ENCODE measurements at regions of chr11 and their contacts with region 1.

Region 1: DNA sequence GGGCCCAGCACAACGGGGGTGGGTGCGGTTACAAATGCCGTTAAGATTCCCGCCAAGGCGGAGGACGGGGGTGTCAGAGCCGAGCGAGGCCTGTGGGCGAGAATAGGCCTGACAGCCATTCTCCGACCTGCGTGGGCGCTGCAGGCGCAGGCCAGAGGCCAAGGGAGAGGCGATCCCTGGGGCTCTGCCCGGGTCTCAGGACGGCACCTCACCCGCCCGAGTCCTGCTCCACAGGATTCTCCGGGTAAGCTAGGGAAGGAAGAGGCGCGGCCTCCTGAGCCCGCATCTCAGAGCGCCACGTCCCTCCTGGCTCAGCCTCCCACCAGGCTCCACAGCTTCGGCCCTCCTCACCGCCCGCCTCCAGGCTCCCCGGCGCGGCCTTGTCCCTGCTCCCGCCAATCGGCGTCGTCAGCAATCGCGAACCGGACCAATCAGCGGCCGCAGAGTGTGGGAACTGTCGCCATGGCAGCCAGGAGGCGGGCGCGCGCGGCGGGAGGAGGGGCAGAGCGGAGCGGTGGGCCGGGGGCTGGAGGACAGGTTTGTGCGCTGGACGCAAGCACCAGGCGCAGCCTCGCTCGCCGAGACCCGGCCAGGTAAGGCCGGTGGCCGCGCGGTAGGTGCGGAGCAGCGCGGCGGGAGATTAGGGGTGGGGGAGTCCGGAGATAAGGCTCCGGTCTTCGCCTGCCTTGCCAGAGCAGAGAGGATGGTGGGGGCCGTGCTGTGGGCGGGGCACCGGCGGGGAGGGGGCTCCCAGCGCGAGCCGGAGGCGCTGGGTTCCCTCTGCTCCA is at the start of gene NUCB2:
- DNase-seq: peak; percentile 99
- ATAC-seq: peak; percentile 92
- H3K4me3 Mint-ChIP-seq: peak within 1 kb of the TSS; percentile 75
- H3K27ac Mint-ChIP-seq: peak within 1 kb of the TSS; percentile 96
- H3K4me1 Mint-ChIP-seq: peaks cover 36% of the 10 kb centered on the region
- H3K27me3 Mint-ChIP-seq: no peaks in the 10 kb centered on the region
- total RNA-seq, gene NUCB2: 45.0 to 59.9 TPM

Region 2: GRCh38 chr11:16738193-16738946 is 538.1 kb before region 1 on chr11 and contains the start of gene C11orf58:
- CTCF ChIA-PET with region 1: interaction called, 3 read pairs
- POLR2A ChIA-PET with region 1: no interaction called
- intact Hi-C with region 1: loop called in 1 of 2 experiments (anchors 2 kb)
- DNase-seq: peak; percentile 96
- ATAC-seq: peak; percentile 97
- H3K4me3 Mint-ChIP-seq: no peak within 1 kb of the TSS
- H3K27ac Mint-ChIP-seq: peak within 1 kb of the TSS; percentile 92
- H3K4me1 Mint-ChIP-seq: peaks cover 23% of the 10 kb centered on the region
- H3K27me3 Mint-ChIP-seq: no peaks in the 10 kb centered on the region
- total RNA-seq, gene C11orf58: 142 to 193 TPM

Region 3: GRCh38 chr11:17298302-17298701 is 21.9 kb after region 1 on chr11:
- CTCF ChIA-PET with region 1: interaction called, 4 read pairs
- POLR2A ChIA-PET with region 1: interaction called, 8 read pairs
- intact Hi-C with region 1: loop called (anchors 1 kb)
- DNase-seq: peak; percentile 83
- ATAC-seq: peak; percentile 82
- H3K4me3 Mint-ChIP-seq: no peak overlapping the region
- H3K27ac Mint-ChIP-seq: no peak overlapping the region
- H3K4me1 Mint-ChIP-seq: peaks cover 40% of the 10 kb centered on the region
- H3K27me3 Mint-ChIP-seq: no peaks in the 10 kb centered on the region

Region 4: GRCh38 chr11:17389211-17389956 is 113.0 kb after region 1 on chr11:
- CTCF ChIA-PET with region 1: interaction called, 7 read pairs
- POLR2A ChIA-PET with region 1: no interaction called
- intact Hi-C with region 1: loop called in 1 of 2 experiments (anchors 1 kb)
- DNase-seq: peak; percentile 86
- ATAC-seq: peak; percentile 82
- H3K4me3 Mint-ChIP-seq: peak overlapping the region; percentile 66
- H3K27ac Mint-ChIP-seq: no peak overlapping the region
- H3K4me1 Mint-ChIP-seq: peaks cover 3% of the 10 kb centered on the region
- H3K27me3 Mint-ChIP-seq: peaks cover 8% of the 10 kb centered on the region

Region 5: DNA sequence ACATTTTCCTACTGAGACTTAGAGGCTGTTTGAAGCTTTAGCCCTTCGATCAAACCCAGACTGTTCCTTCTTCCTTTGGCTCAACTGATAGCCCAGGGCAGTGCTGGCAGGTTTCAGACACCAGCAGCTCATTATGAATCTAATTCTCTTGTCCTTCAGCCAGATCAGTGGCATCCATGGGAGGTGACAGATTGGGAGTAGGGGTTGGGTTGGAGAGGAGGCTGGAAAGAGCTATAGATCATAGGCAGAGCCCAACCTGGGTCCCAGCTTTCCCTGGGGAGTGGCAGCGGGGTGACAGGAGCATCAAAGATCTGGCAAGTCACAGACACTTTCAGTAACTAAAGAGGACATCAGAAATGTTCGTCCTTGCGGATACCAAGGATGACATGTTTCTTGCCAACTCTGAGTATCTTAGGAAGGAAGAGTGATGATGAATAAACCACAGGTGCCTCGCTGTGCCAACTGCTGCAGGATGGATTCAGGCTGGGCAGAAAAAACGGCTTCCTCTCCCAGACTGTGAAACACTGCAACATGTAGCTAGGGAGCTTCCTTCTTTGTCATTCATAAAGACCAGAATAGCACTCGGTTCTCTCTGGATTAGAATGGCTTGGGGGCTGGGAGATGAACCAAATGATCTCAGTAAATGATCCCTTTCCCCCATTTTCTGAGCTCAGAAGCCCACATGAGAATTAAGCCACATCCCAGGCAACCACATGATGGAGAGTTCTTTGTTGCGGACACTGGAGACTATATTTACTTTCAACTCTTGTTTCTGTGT is 181.2 kb after region 1 on chr11:
- CTCF ChIA-PET with region 1: no interaction called
- POLR2A ChIA-PET with region 1: no interaction called
- intact Hi-C with region 1: no loop called
- DNase-seq: no peak
- ATAC-seq: no peak
- H3K4me3 Mint-ChIP-seq: no peak overlapping the region
- H3K27ac Mint-ChIP-seq: no peak overlapping the region
- H3K4me1 Mint-ChIP-seq: no peaks in the 10 kb centered on the region
- H3K27me3 Mint-ChIP-seq: peaks cover 6% of the 10 kb centered on the region